ENCODE measurements at regions of chr11 and their contacts with region 1.

Region 1: GRCh38 chr11:94897330-94897768 is 76.0 kb downstream of the CWC15 start:
- DNase-seq: no peak
- H3K4me3 ChIP-seq: no peak overlapping the region
- CTCF ChIP-seq: peak; percentile 76

Region 2: GRCh38 chr11:94673951-94674491 is 223.3 kb before region 1 on chr11:
- CTCF ChIA-PET with region 1: no interaction called
- POLR2A ChIA-PET with region 1: no interaction called
- DNase-seq: no peak
- H3K4me3 ChIP-seq: no peak overlapping the region
- CTCF ChIP-seq: no peak

Region 3: DNA sequence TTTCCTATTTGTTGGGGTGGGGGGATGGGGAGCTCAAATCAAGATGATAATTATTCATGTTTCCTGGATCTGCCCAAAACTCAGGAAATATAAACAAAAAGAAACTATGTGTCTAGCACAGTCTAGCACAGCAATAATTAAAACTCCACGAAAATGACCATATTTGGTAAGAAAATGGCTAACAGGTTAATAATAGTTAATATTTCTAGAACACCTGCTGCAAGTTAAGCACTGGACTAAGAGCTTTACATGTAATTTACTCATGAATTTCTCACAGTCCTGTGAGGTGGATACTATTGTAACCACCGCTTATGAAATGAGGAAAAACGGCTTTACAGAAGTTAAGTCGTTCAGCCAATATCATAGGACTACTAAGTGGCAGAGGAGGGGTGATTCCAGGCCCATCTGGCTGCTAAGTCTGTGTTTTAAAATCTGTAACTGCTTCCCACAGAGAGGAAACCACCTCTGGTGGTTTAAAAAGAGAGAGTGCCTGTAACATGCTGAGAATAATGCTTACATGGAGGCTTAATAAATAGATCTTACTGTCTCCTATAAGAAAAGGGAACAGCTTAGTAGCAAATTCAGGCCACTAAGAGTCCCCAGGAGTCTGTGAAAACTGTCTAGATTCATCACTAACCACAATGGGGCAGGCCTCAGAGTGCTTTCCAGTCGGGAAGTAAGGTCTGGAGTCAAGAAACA is 140.2 kb before region 1 on chr11:
- CTCF ChIA-PET with region 1: no interaction called
- POLR2A ChIA-PET with region 1: no interaction called
- DNase-seq: no peak
- H3K4me3 ChIP-seq: no peak overlapping the region
- CTCF ChIP-seq: no peak

Region 4: DNA sequence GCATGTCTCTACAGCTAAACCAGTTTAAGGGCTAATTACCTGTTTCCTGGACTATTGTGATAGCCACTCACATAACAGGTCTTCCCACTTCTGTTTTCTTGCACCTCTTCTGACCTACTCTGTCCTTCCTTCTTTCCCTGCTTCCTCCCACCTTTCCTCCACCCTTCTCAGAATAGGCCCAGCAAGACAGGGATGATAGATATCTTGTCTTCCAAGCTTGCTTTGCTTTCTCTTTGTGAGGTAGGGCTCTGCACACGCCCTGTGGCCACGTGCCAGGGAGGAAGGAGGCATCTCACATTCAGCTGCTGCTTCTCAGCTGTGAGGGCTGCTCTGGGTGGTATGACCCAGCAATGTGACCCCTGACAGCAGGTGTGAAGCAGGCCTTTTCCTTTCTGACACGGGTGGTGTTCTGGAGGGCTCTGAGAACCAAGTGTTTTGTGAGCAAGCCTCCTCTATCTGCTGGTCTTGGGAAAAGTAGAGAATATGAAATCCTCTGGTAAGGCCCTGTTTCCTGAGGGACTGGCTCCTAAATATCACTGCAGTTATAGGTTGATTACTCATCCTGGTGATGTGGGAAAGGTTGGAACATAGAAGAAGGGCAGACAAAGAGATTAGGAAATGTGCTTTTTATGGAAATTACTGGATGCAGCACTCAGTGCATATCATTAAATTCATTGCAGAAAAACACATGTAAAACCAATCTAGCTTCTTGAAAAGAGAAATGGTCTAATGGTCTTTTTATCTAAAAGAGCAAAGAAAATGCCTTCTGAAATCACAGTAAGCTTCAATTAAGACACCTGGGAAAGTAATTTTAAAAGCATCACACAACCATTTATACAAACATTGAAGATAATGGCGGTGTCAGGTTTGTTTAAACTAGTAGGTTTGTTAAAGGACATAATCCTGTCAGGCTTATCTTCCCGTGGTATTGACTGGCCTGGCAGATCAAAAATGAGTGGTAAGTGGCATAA is 120.7 kb before region 1 on chr11:
- CTCF ChIA-PET with region 1: interaction called, 10 read pairs
- POLR2A ChIA-PET with region 1: interaction called, 3 read pairs
- DNase-seq: no peak
- H3K4me3 ChIP-seq: no peak overlapping the region; the same call in 1 of the 2 replicates
- CTCF ChIP-seq: no peak

Region 5: DNA sequence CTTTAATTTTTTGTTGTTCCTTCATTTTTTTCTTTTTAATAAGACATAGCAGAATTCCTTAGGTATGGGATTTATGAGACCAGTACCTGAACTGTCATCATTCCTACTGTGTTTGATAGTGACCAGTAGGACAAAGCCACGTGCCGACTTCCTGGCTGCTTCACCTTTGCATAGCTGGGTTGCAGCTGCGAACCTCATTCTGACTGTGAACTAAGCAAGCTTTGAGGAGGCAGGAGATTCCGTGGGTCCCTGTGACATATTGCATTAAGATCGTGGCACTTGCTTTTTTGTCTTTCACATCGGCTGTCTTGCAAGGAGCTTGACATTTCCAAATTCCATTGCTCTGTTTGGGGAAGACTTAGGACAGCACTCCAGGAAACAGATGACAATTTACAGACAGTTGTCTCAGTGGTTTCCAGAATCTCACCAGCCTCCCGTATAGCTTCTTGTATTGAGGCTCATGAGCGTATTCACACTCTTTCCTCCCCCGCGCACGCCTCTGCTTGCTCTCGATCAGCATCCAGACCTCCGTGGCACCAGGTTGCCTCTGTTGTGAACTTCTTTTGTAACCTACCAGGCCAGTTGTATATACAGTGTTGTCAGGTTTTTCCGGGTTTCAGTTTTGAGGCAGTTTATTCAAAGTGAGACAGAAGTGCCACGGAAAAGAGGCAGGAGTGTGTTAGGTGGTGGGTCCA is 25.7 kb before region 1 on chr11:
- CTCF ChIA-PET with region 1: interaction called, 11 read pairs
- POLR2A ChIA-PET with region 1: no interaction called
- DNase-seq: no peak
- H3K4me3 ChIP-seq: no peak overlapping the region
- CTCF ChIP-seq: no peak

Region 6: GRCh38 chr11:94885133-94885532 is 12.2 kb before region 1 on chr11:
- CTCF ChIA-PET with region 1: interaction called, 46 read pairs
- POLR2A ChIA-PET with region 1: no interaction called
- DNase-seq: no peak
- H3K4me3 ChIP-seq: no peak overlapping the region
- CTCF ChIP-seq: no peak

Region 7: DNA sequence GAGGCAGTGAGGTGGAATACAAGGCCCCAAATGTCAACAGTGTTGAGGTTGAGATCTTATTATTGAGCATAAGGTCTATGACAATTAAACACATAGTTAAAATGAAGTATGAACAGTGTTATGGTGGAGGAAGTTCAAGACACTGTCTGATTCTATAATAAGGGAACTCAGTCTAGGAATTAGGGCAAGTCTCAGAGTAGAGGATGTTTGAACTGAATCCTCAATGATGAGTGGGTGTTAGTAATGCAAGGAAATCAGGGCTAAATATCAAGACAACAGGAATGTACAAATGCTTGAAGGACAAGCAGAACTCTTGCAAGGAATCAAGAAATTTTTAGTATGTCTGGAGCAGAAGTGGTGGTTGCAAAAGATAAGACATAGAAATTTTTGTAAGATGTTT is 23.0 kb after region 1 on chr11:
- CTCF ChIA-PET with region 1: interaction called, 11 read pairs
- POLR2A ChIA-PET with region 1: no interaction called
- DNase-seq: no peak
- H3K4me3 ChIP-seq: no peak overlapping the region
- CTCF ChIP-seq: no peak

Region 8: DNA sequence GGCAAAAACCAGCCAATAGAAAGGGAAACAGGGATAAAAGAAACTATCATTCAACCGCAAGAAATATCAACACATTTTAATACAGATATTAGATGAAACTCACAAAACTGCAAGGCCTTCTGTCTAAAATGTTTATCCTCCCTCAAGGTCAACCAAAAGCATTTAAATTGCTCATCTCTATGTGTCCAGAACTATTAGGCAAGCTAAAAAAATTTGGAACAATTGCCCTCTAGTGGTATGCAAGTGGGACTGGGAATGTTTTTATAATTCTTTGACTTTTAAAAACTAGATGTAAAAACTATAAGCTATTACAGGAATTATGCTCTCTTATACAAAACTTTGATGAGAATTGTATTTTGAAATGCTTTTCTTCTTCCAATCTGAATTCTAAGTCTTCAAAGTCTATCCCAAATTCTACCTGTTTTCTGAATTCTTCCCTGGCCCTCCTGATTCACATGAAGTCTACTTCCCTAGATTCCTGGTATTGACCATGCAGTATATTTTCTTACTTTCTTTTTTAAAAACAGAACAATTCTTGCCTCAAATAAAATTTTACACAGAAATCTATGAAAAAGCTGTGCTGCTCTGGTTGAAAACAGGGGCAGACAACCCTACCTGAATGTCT is 71.1 kb after region 1 on chr11:
- CTCF ChIA-PET with region 1: interaction called, 11 read pairs
- POLR2A ChIA-PET with region 1: no interaction called
- DNase-seq: no peak
- H3K4me3 ChIP-seq: no peak overlapping the region
- CTCF ChIP-seq: peak; percentile 42